ENCODE measurements at regions of chr10 and their contacts with region 1.

Region 1: GRCh38 chr10:23525406-23525805 is 86.5 kb downstream of the OTUD1 start:
- DNase-seq: peak in 2 of 9 experiments; percentile 27 to 39
- ATAC-seq: no peak
- H3K4me3 ChIP-seq: no peak overlapping the region
- H3K4me3 Mint-ChIP-seq: no peak overlapping the region
- H3K27ac ChIP-seq: no peak overlapping the region
- H3K27ac Mint-ChIP-seq: no peak overlapping the region
- H3K4me1 ChIP-seq: no peaks in the 10 kb centered on the region
- H3K4me1 Mint-ChIP-seq: no peaks in the 10 kb centered on the region
- H3K27me3 ChIP-seq: no peaks in the 10 kb centered on the region
- H3K27me3 Mint-ChIP-seq: no peaks in the 10 kb centered on the region
- CTCF ChIP-seq: peak; percentile 15

Region 2: GRCh38 chr10:23540401-23541030 is 15.1 kb after region 1 on chr10:
- CTCF ChIA-PET with region 1: interaction called, 15 read pairs
- POLR2A ChIA-PET with region 1: interaction called, 7 read pairs
- intact Hi-C with region 1: no loop called
- DNase-seq: peak in 3 of 9 experiments; percentile 8 to 53 (median 18)
- ATAC-seq: peak; percentile 40
- H3K4me3 ChIP-seq: no peak overlapping the region
- H3K4me3 Mint-ChIP-seq: peak overlapping the region; percentile 68
- H3K27ac ChIP-seq: peak overlapping the region in 1 of 2 experiments; percentile 48
- H3K27ac Mint-ChIP-seq: peak overlapping the region; percentile 89
- H3K4me1 ChIP-seq: peaks cover 43% of the 10 kb centered on the region
- H3K4me1 Mint-ChIP-seq: peaks cover 52% of the 10 kb centered on the region
- H3K27me3 ChIP-seq: no peaks in the 10 kb centered on the region
- H3K27me3 Mint-ChIP-seq: no peaks in the 10 kb centered on the region
- CTCF ChIP-seq: no peak

Region 3: DNA sequence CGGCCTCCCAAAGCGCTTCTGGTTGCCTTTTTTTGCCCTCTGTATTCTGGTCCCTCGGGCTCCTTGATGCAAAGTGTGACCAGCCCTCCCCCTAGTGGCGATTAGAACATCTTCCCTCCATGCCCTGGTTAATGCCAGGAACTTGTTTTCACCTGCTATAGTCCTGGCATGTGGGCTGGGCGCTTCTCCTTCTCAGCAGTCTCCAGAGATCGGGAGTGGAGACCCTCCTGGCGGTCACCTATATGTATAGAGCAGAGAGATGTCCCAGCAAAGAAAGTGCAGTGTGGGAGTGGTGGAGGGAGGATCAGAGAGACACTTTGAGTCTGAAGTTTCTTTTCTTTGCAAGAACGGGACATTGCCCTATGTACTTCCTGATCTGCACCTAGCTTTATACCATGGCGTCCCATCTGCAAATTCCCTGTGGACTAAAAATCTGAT is 177.6 kb after region 1 on chr10:
- CTCF ChIA-PET with region 1: interaction called, 5 read pairs
- POLR2A ChIA-PET with region 1: no interaction called
- intact Hi-C with region 1: loop called in 1 of 2 experiments (anchors 5 kb)
- DNase-seq: peak in 8 of 9 experiments; percentile 19 to 72 (median 51)
- ATAC-seq: peak; percentile 57
- H3K4me3 ChIP-seq: no peak overlapping the region
- H3K4me3 Mint-ChIP-seq: no peak overlapping the region
- H3K27ac ChIP-seq: no peak overlapping the region
- H3K27ac Mint-ChIP-seq: no peak overlapping the region
- H3K4me1 ChIP-seq: no peaks in the 10 kb centered on the region
- H3K4me1 Mint-ChIP-seq: peaks cover 6% of the 10 kb centered on the region
- H3K27me3 ChIP-seq: no peaks in the 10 kb centered on the region
- H3K27me3 Mint-ChIP-seq: peaks cover 16% of the 10 kb centered on the region
- CTCF ChIP-seq: peak; percentile 60

Region 4: DNA sequence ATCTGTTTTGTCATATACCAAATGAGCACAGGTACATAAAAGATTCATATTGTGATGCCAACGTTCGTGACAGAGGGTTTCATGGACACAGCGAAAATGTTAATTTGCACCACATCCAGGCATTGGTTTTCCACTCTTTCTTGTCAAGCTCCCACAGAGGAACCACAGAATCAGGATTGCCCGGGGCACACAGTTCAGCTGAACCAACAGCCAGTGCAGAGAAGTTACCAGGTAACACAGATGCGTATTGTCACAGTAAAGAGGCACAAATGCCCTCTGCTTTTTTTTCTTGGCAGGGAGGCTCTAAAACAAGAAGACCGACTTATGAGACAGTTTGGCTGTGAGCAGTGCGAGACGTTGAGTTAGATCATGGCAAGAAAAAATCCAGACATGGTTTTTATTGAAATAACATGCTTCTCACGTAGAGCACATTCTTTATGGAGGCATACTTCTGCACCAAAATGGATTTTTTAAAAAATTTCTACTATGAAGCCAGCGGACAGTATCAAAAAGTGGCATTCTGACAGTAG is 352.4 kb after region 1 on chr10:
- CTCF ChIA-PET with region 1: no interaction called
- POLR2A ChIA-PET with region 1: no interaction called
- intact Hi-C with region 1: no loop called
- DNase-seq: no peak
- ATAC-seq: no peak
- H3K4me3 ChIP-seq: no peak overlapping the region
- H3K4me3 Mint-ChIP-seq: no peak overlapping the region
- H3K27ac ChIP-seq: no peak overlapping the region
- H3K27ac Mint-ChIP-seq: no peak overlapping the region
- H3K4me1 ChIP-seq: no peaks in the 10 kb centered on the region
- H3K4me1 Mint-ChIP-seq: no peaks in the 10 kb centered on the region
- H3K27me3 ChIP-seq: no peaks in the 10 kb centered on the region
- H3K27me3 Mint-ChIP-seq: no peaks in the 10 kb centered on the region
- CTCF ChIP-seq: no peak